ENCODE measurements at regions of chr5 and their contacts with region 1.

Region 1: GRCh38 chr5:129082225-129083136 is 12.1 kb upstream of the ISOC1 start:
- DNase-seq: peak in 3 of 4 experiments; percentile 24 to 82 (median 56)
- ATAC-seq: peak; percentile 80
- H3K4me3 ChIP-seq: no peak overlapping the region
- H3K27ac ChIP-seq: peak overlapping the region; percentile 93
- H3K4me1 ChIP-seq: peaks cover 16 to 46% of the 10 kb centered on the region in 2 experiments; a peak in 4 of 5 replicates
- H3K27me3 ChIP-seq: no peaks in the 10 kb centered on the region
- CTCF ChIP-seq: no peak
- EP300 ChIP-seq: peak; percentile 94
- POLR2A ChIP-seq: no peak
- RAD21 ChIP-seq: peak in 1 of 2 experiments; percentile 24; a peak in 1 of 4 replicates

Region 2: DNA sequence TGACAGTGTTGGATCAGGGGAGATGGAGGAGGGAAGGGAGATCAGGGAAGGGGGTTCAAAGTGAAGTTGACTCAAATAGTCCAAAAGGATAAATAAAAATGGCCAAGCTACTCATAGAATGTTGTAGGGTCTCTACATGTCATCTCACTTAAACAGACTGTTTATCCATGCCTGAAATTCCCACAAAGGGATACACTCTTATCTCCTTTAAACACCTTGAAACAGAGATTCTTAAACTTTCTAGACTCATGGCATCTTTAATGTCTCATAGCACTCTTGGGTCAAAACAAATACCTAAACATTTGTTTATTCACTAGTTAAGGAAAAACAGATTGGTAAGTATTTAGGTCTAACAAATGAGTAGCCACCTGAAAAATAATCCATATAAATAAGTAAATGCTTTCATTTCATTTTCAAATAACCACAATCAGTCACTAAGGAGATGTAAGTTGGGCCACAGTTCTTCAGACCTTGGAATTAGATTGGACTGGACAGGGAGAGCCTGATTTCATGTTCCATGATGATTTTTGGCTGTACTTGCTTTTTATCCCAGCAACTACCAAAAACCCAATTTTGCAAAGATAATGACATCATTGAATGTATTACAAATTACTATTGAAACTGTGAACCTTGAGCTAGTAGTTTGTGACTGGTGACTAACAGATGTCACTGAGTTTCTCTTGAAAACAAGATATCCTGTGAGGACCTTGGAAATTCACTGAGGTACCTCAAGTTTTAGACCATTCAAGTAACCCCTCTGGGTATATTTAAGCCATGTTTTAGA is 50.4 kb before region 1 on chr5:
- CTCF ChIA-PET with region 1: no interaction called
- POLR2A ChIA-PET with region 1: no interaction called
- in situ Hi-C with region 1: no loop called
- intact Hi-C with region 1: loop called (anchors 5 kb)
- DNase-seq: peak in 1 of 4 experiments; percentile 30
- ATAC-seq: no peak
- H3K4me3 ChIP-seq: no peak overlapping the region
- H3K27ac ChIP-seq: no peak overlapping the region
- H3K4me1 ChIP-seq: no peaks in the 10 kb centered on the region
- H3K27me3 ChIP-seq: no peaks in the 10 kb centered on the region
- CTCF ChIP-seq: no peak
- EP300 ChIP-seq: no peak
- POLR2A ChIP-seq: no peak
- RAD21 ChIP-seq: no peak

Measured in K562 (cell line).